Activated CD4-positive, alpha-beta memory T cell treated with anti-CD3 and anti-CD28 coated beads, Interleukin-2, amount 10 ng/mL, durations not matched to agents 7 days and 5 days (primary cell): ENCODE measurements at regions of chr22 and their contacts with region 1.

Region 1: GRCh38 chr22:22884010-22884887 is 3.4 kb upstream of the IGLL5 start:
- DNase-seq: peak; percentile 78
- H3K4me3 Mint-ChIP-seq: no peak overlapping the region
- H3K27ac Mint-ChIP-seq: no peak overlapping the region
- H3K4me1 Mint-ChIP-seq: peaks cover 22% of the 10 kb centered on the region
- H3K27me3 Mint-ChIP-seq: peaks cover 38% of the 10 kb centered on the region

Region 2: DNA sequence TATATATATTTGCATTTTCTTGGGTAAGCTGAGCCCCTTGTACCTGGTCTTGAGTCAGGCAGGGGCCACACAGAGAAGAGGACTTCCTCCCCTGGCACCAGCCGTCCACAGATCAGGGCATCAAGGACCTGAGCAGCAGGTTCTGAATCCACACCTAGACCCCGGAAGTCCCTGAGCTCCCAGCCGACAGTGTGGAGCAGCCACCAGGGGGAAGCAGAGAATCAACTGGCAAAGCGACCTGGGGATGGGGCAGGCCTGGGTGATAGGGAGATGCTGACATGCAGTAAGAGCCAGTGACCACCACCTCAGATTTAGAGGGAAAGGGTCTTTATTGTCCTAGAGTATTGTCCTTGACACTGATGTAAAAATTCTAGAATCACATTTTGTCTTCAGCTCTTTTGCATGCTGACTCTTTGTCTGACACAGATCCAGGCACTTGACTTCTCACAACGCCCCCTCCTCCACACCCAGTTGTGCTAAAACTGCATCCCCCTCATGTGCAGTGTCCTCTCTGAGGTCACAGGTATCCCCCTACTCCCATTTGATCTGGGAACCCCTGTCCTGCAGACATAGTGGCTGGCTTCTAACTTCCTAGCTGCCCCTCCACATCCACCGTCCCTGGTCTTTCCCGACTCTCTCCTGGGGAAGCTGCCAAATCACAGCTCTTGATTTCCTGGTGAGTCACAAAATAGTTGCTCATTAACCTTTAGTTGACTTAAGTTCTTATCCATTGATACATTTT is 130.6 kb before region 1 on chr22:
- CTCF ChIA-PET with region 1: interaction called, 59 read pairs
- POLR2A ChIA-PET with region 1: interaction called, 3 read pairs
- DNase-seq: peak; percentile 83
- H3K4me3 Mint-ChIP-seq: no peak overlapping the region
- H3K27ac Mint-ChIP-seq: no peak overlapping the region
- H3K4me1 Mint-ChIP-seq: peaks cover 6% of the 10 kb centered on the region
- H3K27me3 Mint-ChIP-seq: no peaks in the 10 kb centered on the region

Region 3: DNA sequence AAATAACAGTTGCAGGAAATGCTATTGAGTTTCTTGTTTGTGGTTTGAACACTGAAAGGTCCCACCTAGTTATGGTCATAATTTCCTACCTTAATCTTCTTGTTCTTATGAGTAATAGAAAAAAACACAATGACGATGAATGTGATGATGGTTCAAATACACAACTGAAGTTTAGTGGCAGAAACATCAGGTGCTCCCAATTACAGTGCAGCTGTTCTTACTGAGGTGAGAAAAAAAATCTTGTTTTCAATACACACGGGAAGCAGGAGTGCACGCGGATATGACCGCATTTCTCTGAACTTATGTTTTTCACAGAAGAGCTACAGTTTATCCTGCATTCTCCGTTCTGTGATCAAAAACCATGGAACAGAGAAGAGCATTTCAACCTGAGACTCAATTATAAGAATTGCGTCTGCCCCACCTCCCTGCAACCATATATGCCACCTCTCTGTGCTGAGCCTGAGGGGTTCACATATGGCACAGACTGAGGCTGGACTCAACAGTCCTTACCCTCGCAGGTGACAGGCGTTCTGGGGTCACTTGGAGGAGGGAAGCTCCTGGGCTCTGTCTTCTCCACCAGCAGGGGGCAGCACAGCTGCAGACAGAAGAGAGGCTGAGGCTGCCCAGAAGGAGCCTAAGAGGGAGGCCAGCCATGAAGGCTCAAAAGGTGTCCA is 96.3 kb before region 1 on chr22:
- CTCF ChIA-PET with region 1: interaction called, 80 read pairs
- POLR2A ChIA-PET with region 1: no interaction called
- DNase-seq: peak; percentile 75
- H3K4me3 Mint-ChIP-seq: no peak overlapping the region
- H3K27ac Mint-ChIP-seq: peak overlapping the region; percentile 62
- H3K4me1 Mint-ChIP-seq: peaks cover 41% of the 10 kb centered on the region
- H3K27me3 Mint-ChIP-seq: peaks cover 14% of the 10 kb centered on the region

Region 4: GRCh38 chr22:22818861-22819855 is 65.1 kb before region 1 on chr22:
- CTCF ChIA-PET with region 1: interaction called, 14 read pairs
- POLR2A ChIA-PET with region 1: interaction called, 3 read pairs
- DNase-seq: peak; percentile 76
- H3K4me3 Mint-ChIP-seq: peak overlapping the region; percentile 72
- H3K27ac Mint-ChIP-seq: peak overlapping the region; percentile 96
- H3K4me1 Mint-ChIP-seq: peaks cover 87% of the 10 kb centered on the region
- H3K27me3 Mint-ChIP-seq: no peaks in the 10 kb centered on the region

Region 5: GRCh38 chr22:22865311-22866072 is 18.8 kb before region 1 on chr22:
- CTCF ChIA-PET with region 1: interaction called, 14 read pairs
- POLR2A ChIA-PET with region 1: interaction called, 3 read pairs
- DNase-seq: peak; percentile 47
- H3K4me3 Mint-ChIP-seq: no peak overlapping the region
- H3K27ac Mint-ChIP-seq: peak overlapping the region; percentile 53
- H3K4me1 Mint-ChIP-seq: peaks cover 33% of the 10 kb centered on the region
- H3K27me3 Mint-ChIP-seq: peaks cover 37% of the 10 kb centered on the region

Region 6: GRCh38 chr22:22959147-22959827 is 75.0 kb after region 1 on chr22:
- CTCF ChIA-PET with region 1: interaction called, 93 read pairs
- POLR2A ChIA-PET with region 1: interaction called, 3 read pairs
- DNase-seq: peak; percentile 75
- H3K4me3 Mint-ChIP-seq: no peak overlapping the region
- H3K27ac Mint-ChIP-seq: no peak overlapping the region
- H3K4me1 Mint-ChIP-seq: no peaks in the 10 kb centered on the region
- H3K27me3 Mint-ChIP-seq: peaks cover 39% of the 10 kb centered on the region

Region 7: DNA sequence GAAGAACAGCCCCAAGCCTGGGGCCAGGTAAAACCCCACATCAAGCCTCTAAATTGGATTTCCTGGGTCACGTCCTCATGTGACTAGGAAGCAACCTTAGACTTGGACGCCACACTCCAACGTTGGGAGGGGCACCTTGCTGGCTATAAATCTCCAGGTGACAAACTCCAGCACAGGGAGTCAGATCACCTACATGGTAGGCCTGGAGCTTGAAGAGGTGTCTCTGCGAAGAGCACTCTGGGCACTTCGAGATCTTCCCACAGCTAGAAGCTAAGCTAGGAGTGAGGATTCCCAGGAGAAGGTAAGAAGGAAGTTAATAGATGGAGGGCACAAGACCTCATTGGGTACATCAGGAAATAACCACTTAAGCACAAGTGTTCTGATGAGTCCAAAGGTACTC is 108.9 kb after region 1 on chr22:
- CTCF ChIA-PET with region 1: no interaction called
- POLR2A ChIA-PET with region 1: no interaction called
- DNase-seq: no peak
- H3K4me3 Mint-ChIP-seq: no peak overlapping the region
- H3K27ac Mint-ChIP-seq: no peak overlapping the region
- H3K4me1 Mint-ChIP-seq: no peaks in the 10 kb centered on the region
- H3K27me3 Mint-ChIP-seq: peaks cover 39% of the 10 kb centered on the region